ENCODE measurements at regions of chr17 and their contacts with region 1.

Region 1: DNA sequence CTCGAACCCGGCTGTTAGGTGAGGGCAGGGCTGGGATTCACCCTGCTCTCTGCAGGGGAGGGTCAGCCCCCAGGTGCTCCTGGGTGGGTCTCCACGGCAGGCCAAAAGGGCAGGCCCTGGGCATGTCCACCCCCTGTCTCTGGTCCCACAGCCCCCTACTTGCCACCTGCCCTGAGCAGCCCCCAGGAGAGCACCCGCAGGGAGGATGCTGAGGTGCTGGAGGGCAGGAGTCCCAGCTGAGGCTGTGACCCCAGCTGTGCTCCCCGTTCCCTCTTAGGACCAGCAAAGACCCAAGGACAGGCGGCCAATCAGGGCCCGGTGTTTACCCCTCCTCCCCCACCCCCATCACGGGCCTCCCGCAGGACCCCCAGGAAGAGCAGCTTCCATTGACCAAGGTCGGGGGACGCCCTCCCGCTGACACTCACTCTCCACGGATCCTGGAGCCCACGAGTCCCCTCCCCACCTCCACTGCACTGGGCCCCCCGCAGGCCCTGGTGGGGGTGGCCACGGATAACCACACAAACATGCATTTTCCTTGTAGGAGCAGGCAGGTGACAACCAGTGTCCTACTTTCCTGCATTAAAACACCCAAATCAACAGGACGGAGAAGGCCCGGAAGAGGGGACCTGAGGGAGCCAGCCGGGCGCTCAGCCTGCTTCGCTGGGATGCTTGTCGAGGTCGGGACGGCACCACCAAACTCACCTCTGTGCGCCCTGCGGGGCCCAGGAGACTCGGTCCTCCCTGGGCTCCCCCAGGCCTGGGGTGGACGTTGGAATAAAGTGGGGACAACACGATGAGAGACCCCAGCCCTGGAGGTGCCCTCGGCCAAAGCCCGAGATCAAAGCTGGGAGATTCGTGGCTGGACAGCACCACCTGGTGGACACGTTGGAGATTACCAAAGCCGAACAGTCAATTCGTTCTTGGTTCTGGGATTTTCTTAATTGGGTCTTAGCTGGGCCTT is 22.5 kb upstream of the ENPP7 start:
- DNase-seq: no peak
- ATAC-seq: peak; percentile 50 to 79 (median 66)
- H3K4me3 ChIP-seq: no peak overlapping the region
- H3K27ac ChIP-seq: no peak overlapping the region
- H3K4me1 ChIP-seq: no peaks in the 10 kb centered on the region
- H3K27me3 ChIP-seq: no peaks in the 10 kb centered on the region
- CTCF ChIP-seq: peak; percentile 61 to 81 (median 78)
- POLR2A ChIP-seq: no peak

Region 2: DNA sequence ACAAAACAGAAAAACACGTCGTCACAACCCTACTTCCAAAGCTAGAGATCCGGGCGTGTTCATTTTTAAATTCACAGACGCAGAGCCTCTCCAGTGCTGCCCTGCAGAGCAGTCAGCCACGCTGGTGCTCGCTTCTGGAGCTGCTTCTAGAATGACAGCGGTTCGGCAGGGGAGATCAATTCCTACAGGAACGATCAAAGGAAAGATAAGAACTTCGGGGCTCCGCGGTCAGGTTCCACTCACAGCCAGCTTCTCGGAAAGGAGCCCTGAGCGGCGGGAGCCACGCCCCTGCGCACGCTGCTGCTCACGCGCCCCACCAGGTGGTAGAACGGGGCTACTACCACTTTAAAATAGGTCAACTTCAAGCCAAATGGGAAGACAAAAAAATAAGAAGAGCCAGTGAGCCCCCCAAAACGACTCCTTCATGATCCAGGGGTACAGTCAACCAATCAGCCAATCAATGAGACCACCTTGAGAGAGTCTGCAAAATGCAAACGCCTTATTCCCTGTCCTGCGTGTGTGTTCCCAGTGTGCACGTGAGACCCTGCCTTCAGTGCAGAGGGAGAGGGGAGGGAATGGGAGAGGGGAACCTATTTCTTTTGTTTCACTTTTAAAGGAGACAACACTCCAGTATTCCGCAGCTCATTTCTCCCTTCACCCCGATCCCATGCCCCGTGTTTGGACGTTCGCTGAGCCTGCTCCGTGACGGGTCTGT is 307.1 kb before region 1 on chr17:
- intact Hi-C with region 1: loop called in 1 of 2 experiments (anchors 10 kb)
- DNase-seq: peak; percentile 69 to 74 (median 69)
- ATAC-seq: peak; percentile 93 to 99 (median 98)
- H3K4me3 ChIP-seq: no peak overlapping the region
- H3K27ac ChIP-seq: no peak overlapping the region
- H3K4me1 ChIP-seq: no peaks in the 10 kb centered on the region
- H3K27me3 ChIP-seq: peaks cover 0 to 10% of the 10 kb centered on the region in 2 donors
- CTCF ChIP-seq: peak; percentile 58 to 91 (median 88)
- POLR2A ChIP-seq: no peak

Region 3: GRCh38 chr17:79630821-79631639 is 77.2 kb before region 1 on chr17:
- intact Hi-C with region 1: no loop called
- DNase-seq: peak; percentile 9 to 28 (median 21)
- ATAC-seq: no peak
- H3K4me3 ChIP-seq: no peak overlapping the region
- H3K27ac ChIP-seq: no peak overlapping the region
- H3K4me1 ChIP-seq: no peaks in the 10 kb centered on the region
- H3K27me3 ChIP-seq: no peaks in the 10 kb centered on the region
- CTCF ChIP-seq: no peak
- POLR2A ChIP-seq: no peak